GM12878 (cell line): ENCODE measurements at regions of chr16 and their contacts with region 1.

Region 1: GRCh38 chr16:495127-495748 is 32.3 kb upstream of the CAPN15 start:
- DNase-seq: no peak
- ATAC-seq: peak; percentile 79
- H3K4me3 ChIP-seq: no peak overlapping the region
- H3K27ac ChIP-seq: no peak overlapping the region
- H3K4me1 ChIP-seq: no peaks in the 10 kb centered on the region
- H3K27me3 ChIP-seq: no peaks in the 10 kb centered on the region
- CTCF ChIP-seq: peak; percentile 37 to 42 (median 41); a peak in 4 of 6 replicates
- EP300 ChIP-seq: no peak
- POLR2A ChIP-seq: no peak
- RAD21 ChIP-seq: peak; percentile 23; the same call in 1 of the 2 replicates

Region 2: GRCh38 chr16:297832-298417 is 197.3 kb before region 1 on chr16:
- CTCF ChIA-PET with region 1: no interaction called
- POLR2A ChIA-PET with region 1: interaction called, 10 read pairs
- RAD21 ChIA-PET with region 1: no interaction called
- SMC1A ChIA-PET with region 1: no interaction called
- in situ Hi-C with region 1: no loop called
- intact Hi-C with region 1: no loop called
- DNase-seq: no peak
- ATAC-seq: no peak
- H3K4me3 ChIP-seq: no peak overlapping the region
- H3K27ac ChIP-seq: no peak overlapping the region
- H3K4me1 ChIP-seq: no peaks in the 10 kb centered on the region
- H3K27me3 ChIP-seq: no peaks in the 10 kb centered on the region
- CTCF ChIP-seq: no peak
- EP300 ChIP-seq: no peak
- POLR2A ChIP-seq: no peak
- RAD21 ChIP-seq: no peak

Region 3: DNA sequence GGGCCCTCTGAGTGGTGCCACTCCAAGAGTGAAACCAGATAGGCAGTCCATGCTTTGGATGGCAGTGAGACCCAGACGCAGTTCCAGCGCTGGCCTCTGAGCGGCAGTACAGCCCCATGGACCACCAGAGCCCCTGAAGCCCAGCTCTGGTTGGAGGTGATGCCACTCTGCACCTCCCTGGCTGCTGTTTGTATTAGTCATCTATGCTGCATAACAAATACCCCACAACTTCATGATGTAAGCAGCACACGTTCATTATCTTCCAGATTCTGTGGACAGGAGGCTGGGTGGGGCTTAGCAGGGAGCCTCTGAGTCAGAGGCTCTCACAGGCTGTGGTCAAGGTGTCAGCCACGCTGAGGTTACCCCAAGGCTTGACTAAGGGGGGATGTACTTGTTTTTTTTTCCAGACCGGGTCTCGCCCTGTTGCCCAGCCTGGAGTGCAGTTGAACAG is 103.3 kb before region 1 on chr16:
- CTCF ChIA-PET with region 1: no interaction called
- POLR2A ChIA-PET with region 1: no interaction called
- RAD21 ChIA-PET with region 1: no interaction called
- SMC1A ChIA-PET with region 1: no interaction called
- in situ Hi-C with region 1: no loop called
- intact Hi-C with region 1: loop called (anchors 10 kb)
- DNase-seq: no peak
- ATAC-seq: peak; percentile 91
- H3K4me3 ChIP-seq: no peak overlapping the region
- H3K27ac ChIP-seq: no peak overlapping the region
- H3K4me1 ChIP-seq: peaks cover 8% of the 10 kb centered on the region; the same call in 1 of the 2 replicates
- H3K27me3 ChIP-seq: no peaks in the 10 kb centered on the region
- CTCF ChIP-seq: peak; percentile 66 to 85 (median 82)
- EP300 ChIP-seq: no peak
- POLR2A ChIP-seq: no peak
- RAD21 ChIP-seq: peak; percentile 77

Region 4: GRCh38 chr16:546909-547770 is 51.9 kb after region 1 on chr16:
- CTCF ChIA-PET with region 1: no interaction called
- POLR2A ChIA-PET with region 1: no interaction called
- RAD21 ChIA-PET with region 1: no interaction called
- SMC1A ChIA-PET with region 1: no interaction called
- in situ Hi-C with region 1: no loop called
- intact Hi-C with region 1: no loop called
- DNase-seq: no peak
- ATAC-seq: no peak
- H3K4me3 ChIP-seq: no peak overlapping the region
- H3K27ac ChIP-seq: no peak overlapping the region
- H3K4me1 ChIP-seq: no peaks in the 10 kb centered on the region
- H3K27me3 ChIP-seq: no peaks in the 10 kb centered on the region
- CTCF ChIP-seq: no peak; a peak in 1 of 6 replicates
- EP300 ChIP-seq: no peak
- POLR2A ChIP-seq: no peak
- RAD21 ChIP-seq: no peak